Head of caudate nucleus (tissue), 42 donors: ENCODE measurements at regions of chr12 and their contacts with region 1.

Region 1: DNA sequence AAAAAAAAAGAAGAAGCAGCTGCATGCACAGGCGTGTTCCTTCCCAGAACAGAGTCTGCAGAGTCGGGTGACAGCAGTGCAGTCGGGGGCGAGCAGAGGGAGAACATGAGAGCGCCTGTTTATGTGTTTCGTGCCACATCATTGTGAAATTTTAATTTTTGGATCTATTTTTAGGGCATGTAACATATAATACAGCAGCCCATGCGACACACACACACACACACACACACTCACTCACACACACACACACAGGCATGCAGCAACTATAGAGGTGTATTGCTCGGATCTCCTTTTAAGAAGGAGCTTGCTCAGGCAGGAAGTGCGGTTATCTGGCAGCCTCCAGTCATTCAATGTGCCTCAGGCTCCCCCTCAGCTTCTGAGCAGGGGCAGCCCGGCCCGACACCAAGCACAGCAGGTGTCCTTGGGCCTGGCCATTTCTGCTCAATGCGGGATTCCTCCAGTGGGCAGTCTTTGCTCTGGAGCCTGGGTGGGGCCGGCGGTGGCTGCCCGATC is 71.8 kb downstream of the ZNF664 start:
- DNase-seq: peak in 39 of 42 donors; percentile 38 to 85 (median 60)

Region 2: GRCh38 chr12:123972457-123973401 is 72.1 kb before region 1 on chr12 and contains the starts of genes CCDC92 and ZNF664:
- intact Hi-C with region 1: no loop called
- DNase-seq: peak; percentile 67 to 96 (median 90)

Region 3: GRCh38 chr12:124321040-124321481 is 276.2 kb after region 1 on chr12:
- intact Hi-C with region 1: loop called (anchors 5 kb)
- DNase-seq: peak in 41 of 42 donors; percentile 56 to 93 (median 82)